Dendritic cell treated with granulocyte-macrophage colony-stimulating factor and Interleukin-4, amounts not matched to agents 40 ng/mL and 50 ng/mL, for 4 days (primary cell): ENCODE measurements at regions of chr16 and their contacts with region 1.

Region 1: DNA sequence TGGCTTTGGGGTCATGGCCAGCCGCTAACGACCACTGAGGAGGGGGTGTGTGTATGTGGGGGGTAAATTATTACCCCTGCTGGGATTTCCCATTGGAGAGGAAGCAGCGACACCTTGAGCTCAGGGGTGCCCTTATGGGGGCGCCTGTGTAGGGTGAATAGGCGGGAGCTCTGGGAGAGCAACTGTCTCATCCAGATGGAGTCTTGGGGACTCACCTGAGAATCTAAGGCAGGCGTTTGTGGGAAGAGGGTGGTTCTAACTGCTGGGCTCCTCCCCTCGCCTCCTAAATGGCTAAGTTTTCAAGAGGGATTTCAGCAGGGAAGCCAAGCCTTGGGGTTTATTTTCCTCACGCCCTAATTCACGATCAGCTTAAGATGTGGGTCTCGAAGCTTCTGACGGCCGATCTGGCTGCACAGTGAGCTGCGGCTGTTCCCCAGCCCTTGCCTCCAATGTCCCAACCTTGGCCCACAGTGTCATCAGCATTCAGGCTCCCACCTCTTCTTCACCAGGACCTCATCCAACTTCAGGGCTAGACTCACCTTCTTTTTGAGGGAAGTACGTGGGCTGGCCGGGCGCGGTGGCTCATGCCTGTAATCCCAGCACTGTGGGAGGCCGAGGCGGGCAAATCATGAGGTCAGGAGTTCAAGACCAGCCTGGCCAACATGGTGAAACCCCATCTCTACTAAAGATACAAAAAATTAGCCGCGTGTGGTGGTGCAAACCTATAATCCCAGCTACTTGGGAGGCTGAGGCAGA is 136.9 kb upstream of the EEF2KMT start:
- H3K4me3 Mint-ChIP-seq: no peak overlapping the region
- H3K27ac Mint-ChIP-seq: no peak overlapping the region
- H3K4me1 Mint-ChIP-seq: no peaks in the 10 kb centered on the region
- H3K27me3 Mint-ChIP-seq: peaks cover 23% of the 10 kb centered on the region

Region 2: GRCh38 chr16:5615868-5616642 is 381.6 kb after region 1 on chr16:
- intact Hi-C with region 1: loop called (anchors 5 kb)
- H3K4me3 Mint-ChIP-seq: no peak overlapping the region
- H3K27ac Mint-ChIP-seq: no peak overlapping the region
- H3K4me1 Mint-ChIP-seq: no peaks in the 10 kb centered on the region
- H3K27me3 Mint-ChIP-seq: peaks cover 18% of the 10 kb centered on the region